ENCODE measurements at regions of chr5 and their contacts with region 1.

Region 1: DNA sequence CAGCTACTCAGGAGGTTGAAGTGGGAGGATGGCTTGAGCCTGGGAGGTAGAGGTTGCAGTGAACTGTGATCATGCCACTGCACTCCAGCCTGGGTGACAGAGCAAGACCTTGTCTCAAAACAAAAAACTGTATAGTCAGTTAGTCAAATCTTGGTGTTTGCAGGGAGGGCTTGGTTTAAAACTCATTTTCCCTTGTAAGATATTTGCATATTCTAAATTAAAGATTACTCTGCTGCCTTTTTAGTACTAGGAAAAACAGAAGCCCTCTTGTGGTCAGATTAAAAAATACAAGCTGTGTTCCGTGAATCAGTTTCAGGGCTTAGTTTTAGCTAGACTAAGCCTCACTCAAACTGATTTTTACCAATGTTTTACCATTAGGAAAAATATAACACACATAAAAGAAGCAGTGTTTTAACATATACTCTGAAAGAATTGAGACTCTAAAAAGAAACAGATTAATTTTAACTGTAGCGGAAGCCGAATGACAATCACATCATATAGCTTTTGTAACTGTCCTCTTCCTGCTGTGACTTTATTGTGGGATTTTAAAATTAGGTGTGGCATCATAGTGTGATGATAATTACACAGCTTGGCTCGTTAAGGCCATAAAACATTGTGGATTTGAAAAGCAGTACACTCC is 84.9 kb upstream of the BASP1 start:
- DNase-seq: no peak
- H3K4me3 ChIP-seq: no peak overlapping the region
- H3K27ac ChIP-seq: no peak overlapping the region
- H3K4me1 ChIP-seq: peaks cover 4% of the 10 kb centered on the region
- H3K27me3 ChIP-seq: no peaks in the 10 kb centered on the region
- CTCF ChIP-seq: peak; percentile 55 to 57 (median 56)
- EP300 ChIP-seq: no peak
- POLR2A ChIP-seq: no peak

Region 2: GRCh38 chr5:16736158-16736995 is 396.2 kb before region 1 on chr5:
- intact Hi-C with region 1: no loop called
- DNase-seq: no peak
- H3K4me3 ChIP-seq: no peak overlapping the region
- H3K27ac ChIP-seq: no peak overlapping the region
- H3K4me1 ChIP-seq: peaks cover 2% of the 10 kb centered on the region
- H3K27me3 ChIP-seq: no peaks in the 10 kb centered on the region
- CTCF ChIP-seq: no peak
- EP300 ChIP-seq: no peak
- POLR2A ChIP-seq: no peak

Region 3: GRCh38 chr5:16791036-16791705 is 341.4 kb before region 1 on chr5:
- intact Hi-C with region 1: loop called in 1 of 4 experiments (anchors 5 kb)
- DNase-seq: peak in 1 of 5 donors; percentile 49
- H3K4me3 ChIP-seq: no peak overlapping the region
- H3K27ac ChIP-seq: no peak overlapping the region
- H3K4me1 ChIP-seq: no peaks in the 10 kb centered on the region
- H3K27me3 ChIP-seq: no peaks in the 10 kb centered on the region
- CTCF ChIP-seq: peak; percentile 56 to 83 (median 77)
- EP300 ChIP-seq: no peak
- POLR2A ChIP-seq: no peak

Region 4: GRCh38 chr5:16934123-16934522 is 198.4 kb before region 1 on chr5:
- intact Hi-C with region 1: loop called in 2 of 4 experiments (anchors 5 to 10 kb)
- DNase-seq: peak; percentile 63 to 81 (median 74)
- H3K4me3 ChIP-seq: peak overlapping the region; percentile 56
- H3K27ac ChIP-seq: no peak overlapping the region
- H3K4me1 ChIP-seq: peaks cover 14% of the 10 kb centered on the region
- H3K27me3 ChIP-seq: no peaks in the 10 kb centered on the region
- CTCF ChIP-seq: peak; percentile 38 to 75 (median 57)
- EP300 ChIP-seq: no peak
- POLR2A ChIP-seq: no peak

Measured in ovary (tissue), 10 donors.